AG04450 (cell line): ENCODE measurements at regions of chr17 and their contacts with region 1.

Region 1: GRCh38 chr17:48724251-48725003 is 1.4 kb downstream of the PRAC2 start:
- DNase-seq: peak; percentile 39
- H3K4me3 ChIP-seq: no peak overlapping the region
- H3K27ac ChIP-seq: no peak overlapping the region
- H3K27me3 ChIP-seq: peaks cover 96% of the 10 kb centered on the region
- CTCF ChIP-seq: peak; percentile 82

Region 2: GRCh38 chr17:48663134-48663924 is 61.1 kb before region 1 on chr17:
- CTCF ChIA-PET with region 1: no interaction called
- POLR2A ChIA-PET with region 1: no interaction called
- DNase-seq: no peak
- H3K4me3 ChIP-seq: no peak overlapping the region
- H3K27ac ChIP-seq: no peak overlapping the region
- H3K27me3 ChIP-seq: peaks cover 24% of the 10 kb centered on the region
- CTCF ChIP-seq: no peak

Region 3: GRCh38 chr17:48704361-48705248 is 19.8 kb before region 1 on chr17:
- CTCF ChIA-PET with region 1: interaction called, 10 read pairs
- POLR2A ChIA-PET with region 1: no interaction called
- DNase-seq: no peak
- H3K4me3 ChIP-seq: no peak overlapping the region
- H3K27ac ChIP-seq: no peak overlapping the region
- H3K27me3 ChIP-seq: peaks cover 50% of the 10 kb centered on the region
- CTCF ChIP-seq: no peak

Region 4: GRCh38 chr17:48737330-48738043 is 13.1 kb after region 1 on chr17:
- CTCF ChIA-PET with region 1: interaction called, 11 read pairs
- POLR2A ChIA-PET with region 1: no interaction called
- DNase-seq: no peak
- H3K4me3 ChIP-seq: no peak overlapping the region
- H3K27ac ChIP-seq: no peak overlapping the region
- H3K27me3 ChIP-seq: peaks cover 94% of the 10 kb centered on the region
- CTCF ChIP-seq: no peak

Region 5: GRCh38 chr17:48791128-48792032 is 67.0 kb after region 1 on chr17:
- CTCF ChIA-PET with region 1: interaction called, 102 read pairs
- POLR2A ChIA-PET with region 1: interaction called, 3 read pairs
- DNase-seq: peak; percentile 55
- H3K4me3 ChIP-seq: no peak overlapping the region
- H3K27ac ChIP-seq: no peak overlapping the region
- H3K27me3 ChIP-seq: peaks cover 42% of the 10 kb centered on the region
- CTCF ChIP-seq: peak; percentile 91

Region 6: GRCh38 chr17:48816774-48817590 is 92.6 kb after region 1 on chr17 and contains the start of gene TTLL6:
- CTCF ChIA-PET with region 1: interaction called, 11 read pairs
- POLR2A ChIA-PET with region 1: no interaction called
- DNase-seq: peak; percentile 18
- H3K4me3 ChIP-seq: peak within 1 kb of the TSS; percentile 50
- H3K27ac ChIP-seq: peak within 1 kb of the TSS; percentile 39
- H3K27me3 ChIP-seq: peaks cover 33% of the 10 kb centered on the region
- CTCF ChIP-seq: no peak
- polyA plus RNA-seq, gene TTLL6: 0.04 and 0.06 TPM in 2 replicates

Region 7: DNA sequence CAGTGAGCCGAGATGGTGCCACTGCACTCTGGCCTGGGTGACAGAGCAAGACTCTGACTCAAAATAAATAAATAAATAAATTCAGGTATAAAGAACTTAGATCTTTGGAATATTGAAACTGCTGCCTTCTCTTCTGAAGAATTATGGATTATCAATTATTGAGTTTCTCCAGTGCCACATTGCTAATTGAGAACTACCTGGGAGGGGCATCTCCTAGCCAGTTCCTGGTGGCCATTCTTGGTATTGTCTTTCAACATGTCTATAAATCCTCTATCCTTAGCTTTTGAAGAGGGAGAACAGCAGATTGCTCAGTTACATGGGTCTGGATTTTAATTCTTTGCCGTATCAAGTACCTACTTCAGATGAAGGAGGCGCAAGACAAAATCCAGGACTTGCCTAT is 135.6 kb after region 1 on chr17:
- CTCF ChIA-PET with region 1: no interaction called
- POLR2A ChIA-PET with region 1: no interaction called
- DNase-seq: no peak
- H3K4me3 ChIP-seq: no peak overlapping the region
- H3K27ac ChIP-seq: no peak overlapping the region
- H3K27me3 ChIP-seq: no peaks in the 10 kb centered on the region
- CTCF ChIP-seq: 0 out of 2 replicates have a peak, but pooled peaks have one; percentile 25

Region 8: GRCh38 chr17:49450735-49451134 is 726.3 kb after region 1 on chr17:
- CTCF ChIA-PET with region 1: no interaction called
- POLR2A ChIA-PET with region 1: no interaction called
- DNase-seq: no peak
- H3K4me3 ChIP-seq: no peak overlapping the region
- H3K27ac ChIP-seq: no peak overlapping the region
- H3K27me3 ChIP-seq: peaks cover 19% of the 10 kb centered on the region
- CTCF ChIP-seq: no peak